A549 (cell line): ENCODE measurements at regions of chr9 and their contacts with region 1.

Region 1: DNA sequence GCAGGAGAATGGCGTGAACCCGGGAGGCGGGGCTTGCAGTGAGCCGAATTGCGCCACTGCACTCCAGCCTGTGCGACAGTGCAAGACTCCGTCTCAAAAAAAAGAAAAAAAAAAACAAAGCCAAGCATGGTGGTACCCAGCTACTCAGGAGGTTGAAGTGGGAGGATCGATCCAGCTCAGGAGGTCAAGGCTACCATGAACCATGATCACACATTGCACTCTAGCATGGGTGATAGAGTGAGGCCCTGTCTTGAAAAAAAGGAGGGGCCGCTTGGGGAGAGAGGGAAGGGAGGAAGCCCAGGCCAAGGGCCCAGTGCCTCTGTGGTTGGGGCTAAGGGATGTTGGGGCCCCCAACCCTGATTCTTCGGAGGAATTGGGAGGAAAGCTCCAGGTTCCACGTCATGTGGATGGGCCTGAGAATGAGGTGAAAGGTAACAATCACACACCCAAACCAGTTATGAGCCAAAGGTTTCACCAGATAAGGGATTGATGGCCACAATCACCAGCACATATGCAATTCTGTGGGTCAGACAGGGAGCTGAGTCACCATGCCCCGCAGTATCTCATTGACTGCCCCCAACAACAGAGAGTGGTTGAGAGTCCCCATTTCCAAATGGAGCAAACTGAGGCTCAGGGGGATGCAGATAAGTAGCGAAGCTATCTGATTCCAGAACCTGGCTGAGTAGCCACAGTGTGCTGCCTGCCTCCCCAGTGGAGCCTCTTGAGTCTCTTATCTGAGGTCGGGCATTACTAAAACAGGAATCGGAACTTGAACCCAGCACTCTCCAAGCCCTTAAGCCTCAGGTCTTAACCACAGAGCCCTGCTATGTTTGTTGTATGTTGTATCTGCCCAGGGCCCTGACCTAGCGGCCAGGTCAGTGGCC is 20.5 kb downstream of the SWI5 start:
- DNase-seq: no peak
- ATAC-seq: no peak
- H3K4me3 ChIP-seq: no peak overlapping the region
- H3K27ac ChIP-seq: peak overlapping the region in 1 of 2 experiments; percentile 85; a peak in 4 of 6 replicates
- H3K4me1 ChIP-seq: peaks cover 17% of the 10 kb centered on the region
- CTCF ChIP-seq: no peak
- EP300 ChIP-seq: no peak
- POLR2A ChIP-seq: no peak
- RAD21 ChIP-seq: no peak

Region 2: GRCh38 chr9:128150594-128151308 is 145.8 kb before region 1 on chr9:
- CTCF ChIA-PET with region 1: no interaction called
- POLR2A ChIA-PET with region 1: no interaction called
- DNase-seq: peak; percentile 33 to 42
- ATAC-seq: peak; percentile 14 to 73; a peak in 3 of 6 replicates
- H3K4me3 ChIP-seq: no peak overlapping the region
- H3K27ac ChIP-seq: peak overlapping the region; percentile 76 to 82; a peak in 5 of 6 replicates
- H3K4me1 ChIP-seq: peaks cover 31% of the 10 kb centered on the region
- CTCF ChIP-seq: peak; percentile 9; the same call in 1 of the 3 replicates
- EP300 ChIP-seq: no peak
- POLR2A ChIP-seq: no peak
- RAD21 ChIP-seq: no peak

Region 3: GRCh38 chr9:128254855-128255759 is 41.5 kb before region 1 on chr9:
- CTCF ChIA-PET with region 1: no interaction called
- POLR2A ChIA-PET with region 1: no interaction called
- DNase-seq: peak; percentile 61 to 88
- ATAC-seq: peak; percentile 33 to 79; a peak in 5 of 6 replicates
- H3K4me3 ChIP-seq: no peak overlapping the region
- H3K27ac ChIP-seq: 0 out of 6 replicates have a peak overlapping the region, but pooled peaks of 1 of the 2 experiments have one; percentile 29
- H3K4me1 ChIP-seq: no peaks in the 10 kb centered on the region
- CTCF ChIP-seq: peak; percentile 75
- EP300 ChIP-seq: no peak
- POLR2A ChIP-seq: no peak
- RAD21 ChIP-seq: peak; percentile 32 to 33; a peak in 4 of 5 replicates

Region 4: DNA sequence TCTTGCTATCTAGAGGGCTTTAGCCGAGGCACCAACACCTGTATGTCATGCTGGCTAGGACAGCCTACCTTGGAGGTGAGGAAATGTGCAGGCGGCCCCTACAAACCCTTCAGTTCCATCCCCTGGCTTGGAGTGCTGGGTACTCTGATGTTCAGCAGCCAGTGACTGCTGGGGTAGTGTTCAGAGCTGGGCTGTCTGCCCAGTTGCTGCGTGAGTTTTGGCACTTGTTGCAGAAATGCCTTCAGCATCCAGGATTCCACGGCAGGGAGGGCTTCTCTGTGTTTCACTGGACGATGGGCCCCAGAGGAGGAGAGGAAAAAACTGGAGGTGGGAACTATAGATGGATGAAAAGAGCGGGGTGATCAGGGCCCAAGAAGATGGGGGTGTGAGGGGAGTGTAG is 10.1 kb before region 1 on chr9:
- CTCF ChIA-PET with region 1: interaction called, 48 read pairs
- POLR2A ChIA-PET with region 1: no interaction called
- DNase-seq: no peak
- ATAC-seq: no peak
- H3K4me3 ChIP-seq: no peak overlapping the region
- H3K27ac ChIP-seq: no peak overlapping the region
- H3K4me1 ChIP-seq: no peaks in the 10 kb centered on the region
- CTCF ChIP-seq: no peak
- EP300 ChIP-seq: no peak
- POLR2A ChIP-seq: no peak
- RAD21 ChIP-seq: no peak

Region 5: DNA sequence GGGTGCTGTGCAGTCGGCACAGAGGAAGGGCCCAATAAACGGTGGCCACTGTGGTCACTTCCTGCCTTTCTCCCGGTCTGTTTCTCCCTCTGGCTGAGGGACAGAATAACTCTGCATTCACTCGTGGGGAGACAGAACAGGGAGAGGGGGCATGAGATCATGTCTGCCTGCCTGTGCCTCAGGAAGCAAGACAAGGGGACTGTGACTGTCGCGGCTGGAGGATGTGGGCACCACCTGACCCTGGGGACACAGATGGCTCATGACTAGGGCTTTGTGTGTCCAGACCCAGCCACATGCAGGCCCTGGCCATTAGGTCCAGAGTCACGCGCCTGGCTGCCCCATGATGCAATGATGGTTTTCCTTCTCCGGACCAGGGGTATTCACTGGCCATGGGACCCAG is 19.8 kb after region 1 on chr9:
- CTCF ChIA-PET with region 1: interaction called, 97 read pairs
- POLR2A ChIA-PET with region 1: interaction called, 5 read pairs
- DNase-seq: no peak
- ATAC-seq: peak in 1 of 2 experiments; percentile 35; a peak in 3 of 6 replicates
- H3K4me3 ChIP-seq: no peak overlapping the region
- H3K27ac ChIP-seq: no peak overlapping the region
- H3K4me1 ChIP-seq: peaks cover 8% of the 10 kb centered on the region
- CTCF ChIP-seq: no peak
- EP300 ChIP-seq: no peak
- POLR2A ChIP-seq: no peak
- RAD21 ChIP-seq: no peak

Region 6: GRCh38 chr9:128333451-128333869 is 36.9 kb after region 1 on chr9:
- CTCF ChIA-PET with region 1: interaction called, 40 read pairs
- POLR2A ChIA-PET with region 1: interaction called, 5 read pairs
- DNase-seq: no peak
- ATAC-seq: no peak
- H3K4me3 ChIP-seq: no peak overlapping the region
- H3K27ac ChIP-seq: no peak overlapping the region
- H3K4me1 ChIP-seq: peaks cover 5% of the 10 kb centered on the region; the same call in 1 of the 3 replicates
- CTCF ChIP-seq: no peak
- EP300 ChIP-seq: no peak
- POLR2A ChIP-seq: no peak
- RAD21 ChIP-seq: no peak

Region 7: DNA sequence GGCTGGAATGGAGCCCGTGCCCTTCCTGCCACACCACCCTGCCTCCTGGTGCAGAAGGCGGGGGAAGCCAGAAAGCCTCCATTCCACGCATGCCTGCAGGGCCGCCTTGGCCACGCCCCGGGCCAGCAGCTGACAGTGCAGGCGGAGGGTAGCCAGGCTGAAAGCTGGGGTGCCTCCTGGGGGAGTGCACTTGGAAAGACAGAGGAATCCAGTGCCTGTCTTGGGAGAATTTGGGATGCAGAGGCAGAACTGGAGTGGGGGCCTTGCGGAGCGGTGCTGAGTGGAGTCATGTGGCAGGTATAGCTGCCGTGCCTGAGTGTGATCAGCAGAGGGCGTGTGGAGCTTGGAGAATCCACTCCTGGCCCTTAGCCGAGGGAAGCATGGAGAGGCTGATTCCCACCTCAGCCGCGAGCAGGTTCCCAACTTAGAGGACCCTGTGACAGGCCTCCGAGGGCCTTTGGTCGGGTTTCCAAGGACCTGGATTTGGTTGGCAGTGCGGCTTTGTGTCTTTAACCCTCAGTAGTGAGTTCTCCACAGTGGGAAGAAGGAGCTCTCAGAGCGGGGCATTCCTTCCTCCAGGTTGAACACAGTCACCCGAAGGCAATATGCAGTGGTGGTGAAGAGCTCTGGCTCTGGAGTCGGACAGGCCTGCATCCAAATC is 65.5 kb after region 1 on chr9:
- CTCF ChIA-PET with region 1: interaction called, 182 read pairs
- POLR2A ChIA-PET with region 1: interaction called, 4 read pairs
- DNase-seq: peak; percentile 82 to 91
- ATAC-seq: peak; percentile 87 to 94
- H3K4me3 ChIP-seq: peak overlapping the region; percentile 38
- H3K27ac ChIP-seq: peak overlapping the region; percentile 62 to 90
- H3K4me1 ChIP-seq: peaks cover 13% of the 10 kb centered on the region
- CTCF ChIP-seq: peak; percentile 84
- EP300 ChIP-seq: no peak
- POLR2A ChIP-seq: no peak
- RAD21 ChIP-seq: peak; percentile 84 to 85

Region 8: GRCh38 chr9:128412120-128412790 is 115.7 kb after region 1 on chr9:
- CTCF ChIA-PET with region 1: interaction called, 11 read pairs
- POLR2A ChIA-PET with region 1: no interaction called
- DNase-seq: peak; percentile 30 to 52
- ATAC-seq: peak in 1 of 2 experiments; percentile 71; a peak in 3 of 6 replicates
- H3K4me3 ChIP-seq: no peak overlapping the region
- H3K27ac ChIP-seq: no peak overlapping the region; a peak in 1 of 6 replicates
- H3K4me1 ChIP-seq: no peaks in the 10 kb centered on the region
- CTCF ChIP-seq: peak; percentile 42; the same call in 2 of the 3 replicates
- EP300 ChIP-seq: no peak
- POLR2A ChIP-seq: no peak
- RAD21 ChIP-seq: peak; percentile 60 to 79

Region 9: GRCh38 chr9:128635283-128636023 is 338.9 kb after region 1 on chr9:
- CTCF ChIA-PET with region 1: interaction called, 19 read pairs
- POLR2A ChIA-PET with region 1: no interaction called
- DNase-seq: peak; percentile 93 to 98
- ATAC-seq: peak; percentile 86 to 93
- H3K4me3 ChIP-seq: peak overlapping the region; percentile 31
- H3K27ac ChIP-seq: peak overlapping the region; percentile 97 to 99
- H3K4me1 ChIP-seq: peaks cover 43% of the 10 kb centered on the region
- CTCF ChIP-seq: peak; percentile 74
- EP300 ChIP-seq: peak; percentile 26 to 54; a peak in 2 of 5 replicates
- POLR2A ChIP-seq: peak; percentile 10; the same call in 1 of the 2 replicates
- RAD21 ChIP-seq: peak; percentile 59 to 69